ENCODE measurements at regions of chr1 and their contacts with region 1.

Region 1: GRCh38 chr1:24744911-24745710 is at the start of gene CLIC4:
- DNase-seq: peak; percentile 99
- ATAC-seq: peak; percentile 89
- H3K4me3 ChIP-seq: peak within 1 kb of the TSS; percentile 79
- H3K27ac ChIP-seq: peak within 1 kb of the TSS; percentile 92
- H3K4me1 ChIP-seq: peaks cover 29% of the 10 kb centered on the region
- H3K27me3 ChIP-seq: no peaks in the 10 kb centered on the region
- CTCF ChIP-seq: peak; percentile 46
- POLR2A ChIP-seq: peak; percentile 99
- RAD21 ChIP-seq: peak; percentile 39
- total RNA-seq, gene CLIC4: 392 and 524 TPM in 2 replicates

Region 2: GRCh38 chr1:24415334-24415909 is 329.7 kb before region 1 on chr1 and contains the start of gene NIPAL3:
- CTCF ChIA-PET with region 1: no interaction called
- POLR2A ChIA-PET with region 1: no interaction called
- dilution Hi-C with region 1: no loop called
- in situ Hi-C with region 1: no loop called
- intact Hi-C with region 1: loop called (anchors 10 kb)
- DNase-seq: peak; percentile 99
- ATAC-seq: peak; percentile 67
- H3K4me3 ChIP-seq: peak within 1 kb of the TSS; percentile 69
- H3K27ac ChIP-seq: peak within 1 kb of the TSS; percentile 72
- H3K4me1 ChIP-seq: peaks cover 18% of the 10 kb centered on the region
- H3K27me3 ChIP-seq: no peaks in the 10 kb centered on the region
- CTCF ChIP-seq: peak; percentile 71
- POLR2A ChIP-seq: no peak; the same call in 1 of the 2 replicates
- RAD21 ChIP-seq: peak; percentile 43
- total RNA-seq, gene NIPAL3: 95.3 and 123 TPM in 2 replicates

Region 3: GRCh38 chr1:24688621-24689195 is 56.4 kb before region 1 on chr1:
- CTCF ChIA-PET with region 1: interaction called, 24 read pairs
- POLR2A ChIA-PET with region 1: interaction called, 12 read pairs
- dilution Hi-C with region 1: no loop called
- in situ Hi-C with region 1: no loop called
- intact Hi-C with region 1: loop called (anchors 1 kb)
- DNase-seq: peak; percentile 61
- ATAC-seq: peak; percentile 88
- H3K4me3 ChIP-seq: no peak overlapping the region
- H3K27ac ChIP-seq: no peak overlapping the region
- H3K4me1 ChIP-seq: peaks cover 5% of the 10 kb centered on the region
- H3K27me3 ChIP-seq: no peaks in the 10 kb centered on the region
- CTCF ChIP-seq: peak; percentile 92
- POLR2A ChIP-seq: peak; percentile 36; the same call in 1 of the 2 replicates
- RAD21 ChIP-seq: peak; percentile 98

Region 4: GRCh38 chr1:24822887-24823286 is 77.8 kb after region 1 on chr1:
- CTCF ChIA-PET with region 1: interaction called, 4 read pairs
- POLR2A ChIA-PET with region 1: interaction called, 7 read pairs
- dilution Hi-C with region 1: no loop called
- in situ Hi-C with region 1: loop called (anchors 5 kb)
- intact Hi-C with region 1: no loop called
- DNase-seq: no peak
- ATAC-seq: no peak
- H3K4me3 ChIP-seq: no peak overlapping the region
- H3K27ac ChIP-seq: no peak overlapping the region
- H3K4me1 ChIP-seq: peaks cover 14% of the 10 kb centered on the region
- H3K27me3 ChIP-seq: no peaks in the 10 kb centered on the region
- CTCF ChIP-seq: no peak
- POLR2A ChIP-seq: no peak
- RAD21 ChIP-seq: no peak

Region 5: DNA sequence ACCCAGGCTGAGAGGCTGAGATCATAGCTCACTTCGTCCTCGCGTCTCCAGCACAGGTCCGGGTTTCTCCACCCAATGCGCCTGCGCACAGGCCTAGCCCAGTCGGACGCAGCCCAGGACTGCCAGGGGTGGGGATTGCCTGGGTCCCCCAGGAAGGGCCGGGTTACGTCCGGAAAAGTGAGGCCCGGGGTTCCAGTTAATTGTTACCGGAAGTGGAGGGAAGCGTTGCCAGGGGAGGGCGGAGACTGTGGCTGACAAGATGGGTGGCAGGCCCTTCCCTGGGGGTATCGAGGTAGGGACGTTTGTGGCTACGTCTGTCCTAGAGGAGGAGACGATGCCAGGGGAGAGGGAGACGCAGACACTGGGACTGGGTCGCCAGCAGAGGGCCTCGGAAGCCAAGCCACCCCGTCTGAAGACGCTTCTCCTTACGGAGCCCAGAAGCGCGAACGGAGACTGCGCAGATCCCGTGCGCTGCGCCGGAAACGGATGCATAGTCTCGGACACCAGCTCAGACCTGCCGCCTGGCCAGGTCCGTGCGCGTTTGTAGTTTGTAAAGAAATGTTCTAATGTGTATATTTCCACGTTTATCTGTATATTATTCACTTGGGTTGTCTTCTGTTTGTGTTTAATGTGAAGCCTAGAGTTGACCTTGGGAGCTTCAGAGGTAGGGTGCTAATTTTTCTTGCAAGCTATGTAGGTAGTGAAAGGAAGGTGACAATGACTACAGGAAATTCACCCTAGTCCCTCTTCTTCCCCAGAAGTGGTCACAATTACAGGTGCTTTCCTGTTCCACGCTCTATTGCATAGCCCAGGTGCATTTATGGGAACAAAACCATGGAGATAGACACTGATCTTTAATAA is 494.8 kb after region 1 on chr1:
- CTCF ChIA-PET with region 1: no interaction called
- POLR2A ChIA-PET with region 1: interaction called, 18 read pairs
- dilution Hi-C with region 1: no loop called
- in situ Hi-C with region 1: no loop called
- intact Hi-C with region 1: no loop called
- DNase-seq: peak; percentile 87
- ATAC-seq: peak; percentile 90
- H3K4me3 ChIP-seq: peak overlapping the region; percentile 56
- H3K27ac ChIP-seq: peak overlapping the region; percentile 87
- H3K4me1 ChIP-seq: peaks cover 4% of the 10 kb centered on the region; the same call in 1 of the 2 replicates
- H3K27me3 ChIP-seq: no peaks in the 10 kb centered on the region
- CTCF ChIP-seq: peak; percentile 71
- POLR2A ChIP-seq: peak; percentile 59
- RAD21 ChIP-seq: peak; percentile 70